ENCODE measurements at regions of chr2 and their contacts with region 1.

Region 1: DNA sequence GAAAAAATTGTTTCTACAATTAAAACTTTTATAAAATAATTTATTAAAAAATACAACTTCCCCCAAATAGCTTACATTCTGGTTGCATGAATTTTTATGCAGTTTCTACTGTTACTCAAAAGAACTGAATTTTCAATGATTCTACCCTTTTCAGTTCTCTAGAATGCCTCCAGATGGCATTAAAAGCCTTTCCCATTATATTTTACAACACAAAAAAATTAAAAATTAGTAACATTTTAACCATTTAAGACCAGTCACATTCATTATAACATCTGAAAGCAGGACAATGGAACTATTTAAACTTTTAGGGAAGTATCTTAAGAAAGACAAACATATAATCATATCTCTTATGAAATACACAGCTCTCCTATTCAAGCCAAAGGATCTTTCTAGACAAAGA is 236.0 kb upstream of the REV1 start:
- DNase-seq: no peak
- ATAC-seq: no peak
- H3K4me3 ChIP-seq: no peak overlapping the region
- H3K27ac ChIP-seq: no peak overlapping the region
- H3K4me1 ChIP-seq: no peaks in the 10 kb centered on the region
- H3K27me3 ChIP-seq: peaks cover 2% of the 10 kb centered on the region; the same call in 1 of the 2 replicates
- CTCF ChIP-seq: no peak; the same call in 1 of the 2 replicates

Region 2: GRCh38 chr2:99900556-99900955 is 174.7 kb after region 1 on chr2:
- CTCF ChIA-PET with region 1: no interaction called
- POLR2A ChIA-PET with region 1: no interaction called
- in situ Hi-C with region 1: no loop called
- intact Hi-C with region 1: no loop called
- DNase-seq: no peak
- ATAC-seq: no peak
- H3K4me3 ChIP-seq: no peak overlapping the region
- H3K27ac ChIP-seq: no peak overlapping the region
- H3K4me1 ChIP-seq: no peaks in the 10 kb centered on the region
- H3K27me3 ChIP-seq: peaks cover 5% of the 10 kb centered on the region; the same call in 1 of the 2 replicates
- CTCF ChIP-seq: no peak

Region 3: DNA sequence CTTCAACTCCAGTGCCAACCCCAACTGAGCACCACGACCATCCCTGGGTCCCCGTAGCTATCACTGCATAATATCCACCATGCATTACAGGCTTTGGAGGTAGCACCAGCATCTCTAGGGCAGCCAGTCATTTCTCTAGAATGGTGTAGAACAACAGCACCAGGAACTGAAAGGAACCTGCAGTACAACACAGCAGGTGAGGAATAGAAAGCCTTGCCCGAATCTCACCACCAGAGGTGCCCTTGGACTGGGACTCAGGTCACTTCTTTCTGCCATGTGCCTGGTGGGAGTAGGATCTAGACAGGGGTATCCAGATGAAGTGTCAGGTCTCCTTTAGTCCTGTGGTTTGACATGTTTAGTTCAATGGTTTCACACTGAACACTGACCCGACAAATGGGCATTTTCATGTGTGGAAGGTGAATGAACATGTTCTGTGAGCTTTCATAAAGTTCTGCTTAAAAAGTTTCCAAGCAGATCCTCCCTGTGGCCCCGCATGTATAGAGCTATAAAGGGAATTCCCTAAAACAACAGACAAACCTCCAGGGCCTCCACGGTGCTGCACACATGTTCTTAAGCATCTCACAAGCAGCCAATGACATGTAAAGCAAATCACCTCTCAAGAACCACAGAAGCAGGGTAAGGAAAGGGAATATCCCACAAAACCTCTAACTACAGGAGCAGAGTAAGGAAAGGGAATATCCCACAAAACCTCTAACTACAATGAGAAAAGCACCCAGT is 208.3 kb after region 1 on chr2:
- CTCF ChIA-PET with region 1: no interaction called
- POLR2A ChIA-PET with region 1: interaction called, 10 read pairs
- in situ Hi-C with region 1: no loop called
- intact Hi-C with region 1: no loop called
- DNase-seq: no peak
- ATAC-seq: no peak
- H3K4me3 ChIP-seq: no peak overlapping the region
- H3K27ac ChIP-seq: no peak overlapping the region
- H3K4me1 ChIP-seq: no peaks in the 10 kb centered on the region
- H3K27me3 ChIP-seq: peaks cover 4% of the 10 kb centered on the region; the same call in 1 of the 2 replicates
- CTCF ChIP-seq: 0 out of 2 replicates have a peak, but pooled peaks have one; percentile 2